AG04450 (cell line): ENCODE measurements at regions of chr3 and their contacts with region 1.

Region 1: GRCh38 chr3:186617038-186617946 is 4.4 kb downstream of the AHSG start:
- DNase-seq: peak; percentile 93
- H3K4me3 ChIP-seq: peak overlapping the region; percentile 49
- H3K27ac ChIP-seq: no peak overlapping the region
- H3K27me3 ChIP-seq: peaks cover 12% of the 10 kb centered on the region
- CTCF ChIP-seq: peak; percentile 92

Region 2: GRCh38 chr3:186277268-186277909 is 339.9 kb before region 1 on chr3:
- CTCF ChIA-PET with region 1: interaction called, 11 read pairs
- POLR2A ChIA-PET with region 1: no interaction called
- DNase-seq: peak; percentile 37
- H3K4me3 ChIP-seq: no peak overlapping the region
- H3K27ac ChIP-seq: no peak overlapping the region
- H3K27me3 ChIP-seq: peaks cover 2% of the 10 kb centered on the region
- CTCF ChIP-seq: peak; percentile 64

Region 3: DNA sequence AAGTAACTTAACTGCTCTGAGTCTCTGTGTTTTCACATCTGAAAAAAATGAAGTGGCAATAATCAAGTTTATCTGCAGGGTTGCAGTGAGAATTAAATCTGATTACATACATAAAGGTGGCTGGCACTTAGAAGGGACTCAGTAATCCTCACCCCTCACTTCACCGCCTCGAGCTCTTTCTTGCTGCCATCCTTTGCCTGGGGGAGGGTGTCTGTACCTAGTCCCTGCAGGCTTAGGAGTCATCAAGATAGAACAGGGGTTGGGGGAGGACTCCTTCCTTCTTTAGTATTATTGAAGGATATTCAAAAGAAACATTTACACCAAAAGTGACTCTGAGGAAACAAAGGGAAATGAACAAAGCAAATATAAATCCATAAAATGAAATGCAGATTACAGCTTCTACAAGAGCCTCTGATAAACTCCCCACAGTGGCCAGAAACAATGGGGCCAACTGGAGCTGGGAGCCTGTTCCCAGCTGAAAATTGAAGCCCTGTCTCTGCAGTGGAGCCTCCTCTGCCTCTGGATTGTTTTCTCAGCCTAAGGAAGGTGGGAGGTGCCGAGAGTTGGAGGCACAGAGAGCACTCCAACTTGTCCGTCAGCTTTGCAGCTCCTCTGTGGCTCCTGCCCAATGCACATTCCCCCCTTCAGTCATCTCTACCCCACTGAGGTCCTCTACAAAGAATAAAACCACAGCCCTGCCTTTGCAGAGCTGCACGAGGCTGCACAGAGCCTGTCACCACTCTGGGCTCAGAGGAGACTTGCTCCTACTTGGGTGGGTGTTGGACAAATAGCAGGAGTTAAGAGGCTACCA is 114.9 kb before region 1 on chr3:
- CTCF ChIA-PET with region 1: no interaction called
- POLR2A ChIA-PET with region 1: no interaction called
- DNase-seq: no peak
- H3K4me3 ChIP-seq: no peak overlapping the region
- H3K27ac ChIP-seq: no peak overlapping the region
- H3K27me3 ChIP-seq: peaks cover 9% of the 10 kb centered on the region
- CTCF ChIP-seq: no peak

Region 4: GRCh38 chr3:186514296-186515002 is 102.8 kb before region 1 on chr3:
- CTCF ChIA-PET with region 1: no interaction called
- POLR2A ChIA-PET with region 1: no interaction called
- DNase-seq: no peak
- H3K4me3 ChIP-seq: no peak overlapping the region
- H3K27ac ChIP-seq: no peak overlapping the region
- H3K27me3 ChIP-seq: peaks cover 15% of the 10 kb centered on the region
- CTCF ChIP-seq: peak; percentile 42

Region 5: DNA sequence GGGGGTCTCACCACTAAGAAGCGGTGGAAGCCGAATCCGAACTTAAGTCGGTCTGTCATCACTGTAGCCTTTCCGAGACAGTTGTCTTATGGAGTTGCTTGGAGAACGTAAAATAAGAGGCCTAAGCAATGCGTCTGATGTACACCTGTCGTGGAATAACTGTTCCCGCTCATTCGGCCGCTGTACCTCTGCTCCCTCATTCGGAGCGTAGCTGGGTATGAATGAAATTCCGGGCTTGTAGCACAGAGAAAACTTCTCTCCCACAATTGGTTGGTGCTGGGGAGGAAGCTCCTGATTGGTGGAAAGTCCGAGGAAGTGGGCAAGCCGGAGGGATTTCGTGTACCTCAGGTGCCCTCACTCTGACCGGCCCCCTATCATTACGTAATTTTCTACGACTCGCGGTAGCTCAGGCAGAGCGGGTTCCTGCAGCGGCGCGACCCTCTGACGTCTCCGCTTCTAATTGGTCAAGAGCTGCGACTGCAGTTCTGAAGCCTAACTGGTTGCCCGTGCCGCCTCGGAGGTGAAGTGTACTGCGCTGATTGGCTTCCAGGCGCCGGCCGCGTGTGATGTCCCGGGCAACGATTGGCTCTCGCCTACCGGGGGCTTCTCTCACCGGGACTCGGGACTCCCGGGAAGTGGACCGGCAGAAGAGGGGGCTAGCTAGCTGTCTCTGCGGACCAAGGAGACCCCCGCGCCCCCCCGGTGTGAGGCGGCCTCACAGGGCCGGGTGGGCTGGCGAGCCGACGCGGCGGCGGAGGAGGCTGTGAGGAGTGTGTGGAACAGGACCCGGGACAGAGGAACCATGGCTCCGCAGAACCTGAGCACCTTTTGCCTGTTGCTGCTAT is 47.0 kb before region 1 on chr3 and contains the start of gene DNAJB11:
- CTCF ChIA-PET with region 1: interaction called, 78 read pairs
- POLR2A ChIA-PET with region 1: interaction called, 3 read pairs
- DNase-seq: peak; percentile 99
- H3K4me3 ChIP-seq: peak within 1 kb of the TSS; percentile 76
- H3K27ac ChIP-seq: peak within 1 kb of the TSS; percentile 52
- H3K27me3 ChIP-seq: no peaks in the 10 kb centered on the region
- CTCF ChIP-seq: no peak
- polyA plus RNA-seq, gene DNAJB11: 43.6 and 56.2 TPM in 2 replicates

Region 6: DNA sequence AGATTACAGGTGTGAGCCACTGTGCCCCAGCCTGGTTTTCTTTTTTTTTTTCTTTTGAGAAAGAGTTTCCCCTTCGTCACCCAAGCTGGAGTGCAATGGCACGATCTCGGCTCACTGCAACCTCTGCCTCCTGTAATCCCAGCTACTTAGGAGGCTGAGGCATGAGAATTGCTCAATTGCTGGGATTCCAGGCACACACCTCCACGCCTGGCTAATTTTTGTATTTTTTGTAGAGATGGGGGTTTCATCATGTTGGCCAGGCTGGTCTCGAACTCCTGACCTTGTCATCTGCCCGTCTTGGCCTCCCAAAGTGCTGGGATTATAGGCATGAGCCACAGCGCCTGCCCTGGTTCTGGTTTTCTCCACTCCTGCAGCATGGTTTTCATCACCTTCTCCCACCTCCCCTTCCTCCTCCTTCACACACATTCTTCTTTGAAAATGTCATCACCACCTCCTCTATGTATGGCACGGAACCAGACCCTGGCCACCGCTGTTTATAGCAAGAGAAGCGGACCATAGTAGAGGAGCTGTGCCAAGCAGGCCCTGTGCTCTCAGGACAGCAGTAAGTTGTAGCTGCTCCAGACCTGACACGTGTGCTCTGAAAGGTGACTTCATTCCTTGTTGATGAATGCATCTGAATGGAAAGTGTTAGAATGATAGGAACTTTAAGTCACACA is 19.0 kb before region 1 on chr3:
- CTCF ChIA-PET with region 1: interaction called, 113 read pairs
- POLR2A ChIA-PET with region 1: no interaction called
- DNase-seq: no peak
- H3K4me3 ChIP-seq: no peak overlapping the region
- H3K27ac ChIP-seq: no peak overlapping the region
- H3K27me3 ChIP-seq: peaks cover 4% of the 10 kb centered on the region
- CTCF ChIP-seq: no peak

Region 7: GRCh38 chr3:186783073-186783730 is 165.9 kb after region 1 on chr3 and contains the start of gene EIF4A2:
- CTCF ChIA-PET with region 1: interaction called, 15 read pairs
- POLR2A ChIA-PET with region 1: interaction called, 36 read pairs
- DNase-seq: peak; percentile 78
- H3K4me3 ChIP-seq: peak within 1 kb of the TSS; percentile 100
- H3K27ac ChIP-seq: peak within 1 kb of the TSS; percentile 98
- H3K27me3 ChIP-seq: no peaks in the 10 kb centered on the region
- CTCF ChIP-seq: no peak
- polyA plus RNA-seq, gene EIF4A2: 498 and 774 TPM in 2 replicates

Region 8: GRCh38 chr3:187164885-187165543 is 547.7 kb after region 1 on chr3:
- CTCF ChIA-PET with region 1: interaction called, 13 read pairs
- POLR2A ChIA-PET with region 1: no interaction called
- DNase-seq: no peak
- H3K4me3 ChIP-seq: no peak overlapping the region
- H3K27ac ChIP-seq: no peak overlapping the region
- H3K27me3 ChIP-seq: peaks cover 20% of the 10 kb centered on the region
- CTCF ChIP-seq: peak; percentile 67